ENCODE measurements at regions of chr17 and their contacts with region 1.

Region 1: GRCh38 chr17:59619293-59620063 is at the start of gene CLTC:
- DNase-seq: peak; percentile 94
- ATAC-seq: peak; percentile 88
- H3K4me3 Mint-ChIP-seq: peak within 1 kb of the TSS; percentile 83
- H3K27ac Mint-ChIP-seq: peak within 1 kb of the TSS; percentile 93
- H3K4me1 Mint-ChIP-seq: peaks cover 48% of the 10 kb centered on the region
- H3K27me3 Mint-ChIP-seq: no peaks in the 10 kb centered on the region
- total RNA-seq, gene CLTC: 126 to 131 TPM

Region 2: DNA sequence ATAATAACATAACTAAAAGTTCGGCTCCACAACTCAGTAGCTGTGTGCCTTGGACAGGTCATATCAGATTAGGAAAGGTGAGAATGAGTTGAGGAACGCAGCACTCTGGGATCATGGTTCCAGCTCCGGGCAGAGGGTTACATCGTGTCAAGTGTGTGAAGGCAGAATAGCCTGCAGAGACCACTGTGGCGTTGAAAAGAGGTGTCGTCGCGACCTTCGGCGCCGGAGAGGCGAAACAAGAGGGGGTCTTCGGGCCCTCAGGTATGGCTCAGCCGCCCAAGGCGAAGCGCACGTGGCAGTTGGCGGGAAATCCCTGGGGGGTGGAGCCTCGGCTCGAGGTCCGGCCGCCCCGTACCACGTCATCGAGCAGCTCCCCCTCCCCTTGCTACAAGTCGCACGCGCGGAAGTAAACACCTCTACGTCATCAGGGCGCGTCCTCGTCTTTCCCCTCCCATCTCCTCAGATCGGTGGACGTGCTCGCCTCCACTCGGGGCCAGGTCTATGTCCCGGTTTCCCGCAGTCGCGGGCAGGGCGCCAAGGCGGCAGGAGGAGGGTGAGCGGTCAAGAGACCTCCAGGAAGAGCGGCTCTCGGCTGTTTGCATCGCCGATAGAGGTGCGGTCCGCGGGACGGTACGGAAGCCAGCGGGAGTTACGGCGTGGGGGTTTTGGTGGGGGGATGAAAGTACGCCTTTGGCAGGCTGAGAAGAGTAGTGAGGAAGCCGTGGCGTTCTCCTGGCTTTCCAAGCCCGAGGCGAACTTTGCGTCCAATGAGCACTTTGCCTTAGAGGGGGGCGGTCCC is 54.1 kb before region 1 on chr17 and contains the start of gene DHX40:
- CTCF ChIA-PET with region 1: no interaction called
- POLR2A ChIA-PET with region 1: interaction called, 27 read pairs
- DNase-seq: peak; percentile 97
- ATAC-seq: peak; percentile 89
- H3K4me3 Mint-ChIP-seq: peak within 1 kb of the TSS; percentile 100
- H3K27ac Mint-ChIP-seq: peak within 1 kb of the TSS; percentile 100
- H3K4me1 Mint-ChIP-seq: peaks cover 22% of the 10 kb centered on the region
- H3K27me3 Mint-ChIP-seq: no peaks in the 10 kb centered on the region
- total RNA-seq, gene DHX40: 17.7 to 20.8 TPM

Region 3: GRCh38 chr17:59607817-59608403 is 11.6 kb before region 1 on chr17:
- CTCF ChIA-PET with region 1: interaction called, 11 read pairs
- POLR2A ChIA-PET with region 1: interaction called, 6 read pairs
- DNase-seq: peak; percentile 39
- ATAC-seq: no peak
- H3K4me3 Mint-ChIP-seq: no peak overlapping the region
- H3K27ac Mint-ChIP-seq: no peak overlapping the region
- H3K4me1 Mint-ChIP-seq: peaks cover 5% of the 10 kb centered on the region
- H3K27me3 Mint-ChIP-seq: no peaks in the 10 kb centered on the region

Region 4: GRCh38 chr17:59641799-59642489 is 22.5 kb after region 1 on chr17:
- CTCF ChIA-PET with region 1: interaction called, 7 read pairs
- POLR2A ChIA-PET with region 1: interaction called, 18 read pairs
- DNase-seq: no peak
- ATAC-seq: peak; percentile 89
- H3K4me3 Mint-ChIP-seq: peak overlapping the region; percentile 26
- H3K27ac Mint-ChIP-seq: peak overlapping the region; percentile 55
- H3K4me1 Mint-ChIP-seq: peaks cover 33% of the 10 kb centered on the region
- H3K27me3 Mint-ChIP-seq: no peaks in the 10 kb centered on the region

Region 5: DNA sequence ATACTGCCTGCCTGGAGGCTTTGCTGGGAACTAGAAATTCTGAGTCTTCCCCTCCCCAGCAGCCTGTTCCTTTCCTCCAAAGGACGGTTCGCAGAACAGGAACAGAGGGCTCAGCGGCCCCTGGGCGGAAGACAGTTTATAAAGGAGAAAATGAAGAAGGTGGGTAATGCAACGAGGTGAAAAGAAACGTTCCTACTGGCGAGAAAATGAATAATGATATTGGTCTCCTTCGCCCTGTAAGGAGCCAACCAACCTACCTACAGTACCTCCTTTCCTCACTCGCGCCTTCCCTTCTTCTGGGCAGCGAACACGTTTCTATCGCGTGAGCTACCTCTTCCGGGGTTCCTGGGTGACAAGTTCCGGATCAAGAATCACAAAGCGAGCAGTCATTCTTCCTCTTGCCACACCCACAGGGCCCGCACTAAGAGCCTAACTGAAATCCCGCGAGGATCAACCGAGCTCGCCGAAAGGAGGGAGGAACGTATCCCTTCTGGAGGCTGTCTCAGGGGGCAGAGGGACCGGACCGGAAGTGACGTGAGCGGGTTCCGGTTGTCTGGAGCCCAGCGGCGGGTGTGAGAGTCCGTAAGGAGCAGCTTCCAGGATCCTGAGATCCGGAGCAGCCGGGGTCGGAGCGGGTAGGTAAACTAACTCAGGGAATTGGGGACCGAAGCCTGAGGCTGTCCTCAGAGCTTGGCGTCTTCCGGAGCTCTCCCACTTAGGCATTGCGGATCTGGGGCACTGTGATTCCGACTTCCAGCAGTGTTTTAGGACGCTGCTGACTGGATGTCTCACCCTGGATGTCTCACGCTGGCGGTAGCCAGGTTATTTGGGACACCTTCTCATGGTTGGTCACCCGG is 87.9 kb after region 1 on chr17 and contains the starts of genes PTRH2 and VMP1:
- CTCF ChIA-PET with region 1: interaction called, 3 read pairs
- POLR2A ChIA-PET with region 1: interaction called, 14 read pairs
- DNase-seq: peak; percentile 97
- ATAC-seq: peak; percentile 98
- H3K4me3 Mint-ChIP-seq: peak within 1 kb of the TSS; percentile 98
- H3K27ac Mint-ChIP-seq: peak within 1 kb of the TSS; percentile 98
- H3K4me1 Mint-ChIP-seq: peaks cover 34% of the 10 kb centered on the region
- H3K27me3 Mint-ChIP-seq: no peaks in the 10 kb centered on the region
- total RNA-seq, gene PTRH2: 21.5 to 24.7 TPM
- total RNA-seq, gene VMP1: 122 to 123 TPM